Naive thymus-derived CD4-positive, alpha-beta T cell (primary cell): ENCODE measurements at regions of chr10 and their contacts with region 1.

Region 1: DNA sequence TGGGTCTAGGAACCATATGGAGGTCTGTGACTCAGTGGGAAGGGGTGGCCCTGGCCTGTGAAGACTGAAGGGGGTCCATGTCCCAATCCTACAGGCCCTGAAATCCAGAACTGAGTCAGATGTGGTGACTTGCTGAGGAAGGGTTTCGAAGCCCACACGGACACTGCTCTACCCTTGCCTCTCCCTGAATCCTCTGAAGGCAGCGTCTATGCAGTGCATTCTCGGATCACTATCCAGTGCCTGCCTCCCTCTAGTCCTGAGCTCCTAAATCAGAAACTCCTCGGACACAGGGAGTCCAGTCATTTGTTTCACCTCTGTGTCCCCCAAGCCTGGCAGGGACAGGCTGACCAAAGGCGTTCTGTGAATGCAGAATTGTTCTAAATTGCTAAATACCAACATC is 25.4 kb upstream of the TMEM72 start:
- DNase-seq: no peak
- ATAC-seq: no peak
- H3K4me3 ChIP-seq: no peak overlapping the region
- H3K4me3 Mint-ChIP-seq: no peak overlapping the region
- H3K27ac ChIP-seq: no peak overlapping the region
- H3K27ac Mint-ChIP-seq: no peak overlapping the region
- H3K4me1 ChIP-seq: no peaks in the 10 kb centered on the region
- H3K4me1 Mint-ChIP-seq: peaks cover 0 to 5% (median 0%) of the 10 kb centered on the region in 7 donors
- H3K27me3 ChIP-seq: no peaks in the 10 kb centered on the region
- H3K27me3 Mint-ChIP-seq: peaks cover 0 to 13% (median 0%) of the 10 kb centered on the region in 5 donors

Region 2: DNA sequence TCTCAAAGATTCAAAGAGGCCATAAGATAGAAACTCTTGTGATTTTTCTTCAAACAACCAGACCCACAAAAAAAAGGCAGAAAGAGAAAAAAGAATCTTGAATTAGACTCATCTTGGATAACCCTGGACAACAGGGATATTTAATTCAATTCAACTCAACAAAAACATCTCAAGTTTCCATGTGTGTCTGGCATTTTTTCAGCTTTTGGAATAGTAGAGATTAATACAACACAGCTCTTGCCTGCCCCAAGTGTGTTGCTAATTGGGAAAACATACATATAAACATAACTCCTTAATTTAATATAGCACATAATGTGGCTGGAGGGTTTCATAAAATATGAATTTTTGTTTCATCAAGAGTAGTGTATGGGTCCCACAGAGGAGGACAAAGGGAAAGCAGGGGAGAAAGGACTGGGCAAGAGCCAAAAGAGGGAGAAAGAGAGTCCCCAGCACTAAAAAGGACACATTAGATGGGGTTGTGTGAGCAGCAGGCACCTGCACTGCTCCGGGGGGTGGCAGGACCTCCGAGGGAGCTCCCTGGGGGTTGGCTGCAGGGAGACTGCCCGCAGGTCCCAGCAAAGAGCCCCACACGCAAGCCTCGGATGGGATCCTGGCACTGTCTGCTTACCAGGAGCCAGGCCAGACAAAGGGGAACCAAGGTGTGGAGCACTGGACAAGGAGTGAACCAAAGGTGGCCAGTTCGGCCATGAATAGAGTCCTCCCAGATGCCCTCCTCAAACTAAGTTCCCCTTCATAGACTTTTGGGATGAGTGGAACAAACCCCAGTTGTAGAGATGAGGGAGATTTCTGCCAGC is 40.1 kb before region 1 on chr10:
- CTCF ChIA-PET with region 1: no interaction called
- POLR2A ChIA-PET with region 1: no interaction called
- intact Hi-C with region 1: loop called in 1 of 2 experiments (anchors 1 kb)
- DNase-seq: no peak
- ATAC-seq: no peak
- H3K4me3 ChIP-seq: no peak overlapping the region
- H3K4me3 Mint-ChIP-seq: no peak overlapping the region
- H3K27ac ChIP-seq: no peak overlapping the region
- H3K27ac Mint-ChIP-seq: peak overlapping the region in 1 of 9 donors; percentile 28
- H3K4me1 ChIP-seq: no peaks in the 10 kb centered on the region
- H3K4me1 Mint-ChIP-seq: no peaks in the 10 kb centered on the region
- H3K27me3 ChIP-seq: no peaks in the 10 kb centered on the region
- H3K27me3 Mint-ChIP-seq: peaks cover 6 to 31% (median 12%) of the 10 kb centered on the region in 5 donors